ENCODE measurements at regions of chr11 and their contacts with region 1.

Region 1: DNA sequence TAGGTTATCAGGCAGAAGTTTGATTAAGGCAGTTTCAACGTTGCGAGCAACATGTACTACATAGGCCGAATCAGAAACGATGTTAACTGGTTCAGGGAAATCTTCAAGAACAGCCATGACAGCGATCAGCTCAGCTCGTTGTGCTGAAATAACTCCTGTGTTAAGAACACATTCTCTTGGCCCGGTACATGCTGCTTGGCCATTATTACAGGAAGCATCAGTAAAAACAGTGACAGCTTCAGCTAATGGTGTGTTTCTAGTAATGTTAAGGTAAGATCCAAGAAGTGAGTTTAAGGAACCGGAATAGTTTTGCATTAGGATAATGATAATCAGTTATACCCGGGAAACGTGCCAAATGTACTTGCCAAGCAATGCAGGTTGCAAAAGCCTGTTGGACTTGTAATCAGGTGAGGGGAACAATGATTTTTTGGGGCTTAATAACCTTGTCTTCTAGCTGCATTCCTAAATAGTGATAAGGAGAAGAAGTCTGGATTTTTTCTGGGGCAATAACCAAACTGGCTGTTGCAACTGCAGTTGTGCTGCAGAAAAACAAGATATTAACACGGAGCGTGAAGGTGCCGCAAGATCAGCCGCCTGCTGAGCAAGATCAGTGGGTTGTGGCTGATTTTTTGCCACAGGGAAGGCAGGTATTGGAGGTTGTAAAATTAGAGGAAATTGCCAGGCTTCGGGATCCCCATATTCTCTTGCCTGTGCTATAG is 14.3 kb downstream of the OR52K1 start:
- DNase-seq: no peak
- H3K4me3 Mint-ChIP-seq: no peak overlapping the region
- H3K27ac Mint-ChIP-seq: no peak overlapping the region
- H3K4me1 Mint-ChIP-seq: peaks cover 6% of the 10 kb centered on the region
- H3K27me3 Mint-ChIP-seq: peaks cover 7% of the 10 kb centered on the region

Region 2: GRCh38 chr11:4393209-4393857 is 103.4 kb before region 1 on chr11 and contains the start of gene TRIM21:
- CTCF ChIA-PET with region 1: interaction called, 4 read pairs
- POLR2A ChIA-PET with region 1: no interaction called
- intact Hi-C with region 1: loop called (anchors 1 kb)
- DNase-seq: peak; percentile 95
- H3K4me3 Mint-ChIP-seq: peak within 1 kb of the TSS; percentile 90
- H3K27ac Mint-ChIP-seq: peak within 1 kb of the TSS; percentile 91
- H3K4me1 Mint-ChIP-seq: peaks cover 32% of the 10 kb centered on the region
- H3K27me3 Mint-ChIP-seq: peaks cover 13% of the 10 kb centered on the region
- total RNA-seq, gene TRIM21: 39.2 to 40.3 TPM

Region 3: DNA sequence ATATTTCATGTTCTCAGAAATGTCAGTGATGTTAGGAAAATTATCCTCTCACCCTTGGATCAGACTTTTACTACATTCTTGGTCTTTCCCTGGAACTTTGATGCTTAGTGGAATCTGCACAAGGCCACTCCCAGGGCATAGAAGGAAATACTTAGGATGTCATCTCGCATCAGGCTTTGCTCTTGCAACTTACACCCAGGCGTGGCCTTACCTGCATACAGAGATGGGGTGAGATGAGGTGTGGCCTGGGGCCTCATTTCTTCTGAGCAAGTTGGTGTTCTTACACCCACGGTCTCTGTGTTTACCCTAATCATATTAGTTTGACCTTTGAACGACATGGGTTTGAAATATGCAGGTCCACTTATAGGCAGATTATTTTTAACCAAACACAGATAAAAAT is 66.7 kb before region 1 on chr11:
- CTCF ChIA-PET with region 1: no interaction called
- POLR2A ChIA-PET with region 1: no interaction called
- intact Hi-C with region 1: no loop called
- DNase-seq: no peak
- H3K4me3 Mint-ChIP-seq: no peak overlapping the region
- H3K27ac Mint-ChIP-seq: no peak overlapping the region
- H3K4me1 Mint-ChIP-seq: no peaks in the 10 kb centered on the region
- H3K27me3 Mint-ChIP-seq: no peaks in the 10 kb centered on the region

Region 4: DNA sequence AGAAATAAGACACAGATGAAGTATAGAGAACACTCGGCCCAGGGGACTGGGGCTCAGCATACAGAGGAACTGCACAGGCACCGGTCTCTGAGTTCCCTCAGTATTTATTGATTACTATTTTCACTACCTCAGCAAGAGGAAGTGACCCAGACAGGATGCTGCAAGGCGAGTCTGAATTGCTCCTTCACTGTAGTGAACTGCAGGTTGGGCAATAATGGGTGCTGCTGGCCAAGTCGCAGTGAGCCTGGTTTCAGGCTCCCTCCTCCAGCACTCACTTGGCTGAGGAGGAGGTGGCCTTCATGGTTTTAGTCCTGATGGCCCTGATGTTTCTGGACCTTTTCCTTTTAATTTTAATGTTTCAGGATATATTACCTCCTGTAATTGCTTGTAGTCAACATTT is 37.2 kb before region 1 on chr11:
- CTCF ChIA-PET with region 1: no interaction called
- POLR2A ChIA-PET with region 1: no interaction called
- intact Hi-C with region 1: no loop called
- DNase-seq: no peak
- H3K4me3 Mint-ChIP-seq: no peak overlapping the region
- H3K27ac Mint-ChIP-seq: no peak overlapping the region
- H3K4me1 Mint-ChIP-seq: no peaks in the 10 kb centered on the region
- H3K27me3 Mint-ChIP-seq: peaks cover 7% of the 10 kb centered on the region

Region 5: DNA sequence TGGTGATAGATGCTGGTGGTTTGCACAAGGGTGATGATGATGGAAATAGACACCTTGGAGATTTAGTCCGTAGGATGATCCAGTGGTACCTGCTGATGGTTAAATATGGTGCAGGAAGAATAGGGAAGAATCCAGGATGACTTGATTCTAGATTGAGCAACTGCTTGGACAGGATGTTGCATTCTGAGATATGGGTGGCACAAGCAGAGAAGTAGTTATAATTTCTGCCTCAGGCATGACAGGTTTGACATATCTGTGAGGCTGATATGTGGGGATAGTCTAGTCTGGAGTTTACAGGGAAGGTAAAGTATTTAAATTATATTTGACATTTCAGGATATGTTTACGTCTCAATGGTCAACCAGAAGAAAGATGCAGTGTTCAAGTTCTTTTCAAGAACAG is 26.8 kb before region 1 on chr11:
- CTCF ChIA-PET with region 1: no interaction called
- POLR2A ChIA-PET with region 1: no interaction called
- intact Hi-C with region 1: no loop called
- DNase-seq: no peak
- H3K4me3 Mint-ChIP-seq: no peak overlapping the region
- H3K27ac Mint-ChIP-seq: no peak overlapping the region
- H3K4me1 Mint-ChIP-seq: no peaks in the 10 kb centered on the region
- H3K27me3 Mint-ChIP-seq: peaks cover 9% of the 10 kb centered on the region

Region 6: DNA sequence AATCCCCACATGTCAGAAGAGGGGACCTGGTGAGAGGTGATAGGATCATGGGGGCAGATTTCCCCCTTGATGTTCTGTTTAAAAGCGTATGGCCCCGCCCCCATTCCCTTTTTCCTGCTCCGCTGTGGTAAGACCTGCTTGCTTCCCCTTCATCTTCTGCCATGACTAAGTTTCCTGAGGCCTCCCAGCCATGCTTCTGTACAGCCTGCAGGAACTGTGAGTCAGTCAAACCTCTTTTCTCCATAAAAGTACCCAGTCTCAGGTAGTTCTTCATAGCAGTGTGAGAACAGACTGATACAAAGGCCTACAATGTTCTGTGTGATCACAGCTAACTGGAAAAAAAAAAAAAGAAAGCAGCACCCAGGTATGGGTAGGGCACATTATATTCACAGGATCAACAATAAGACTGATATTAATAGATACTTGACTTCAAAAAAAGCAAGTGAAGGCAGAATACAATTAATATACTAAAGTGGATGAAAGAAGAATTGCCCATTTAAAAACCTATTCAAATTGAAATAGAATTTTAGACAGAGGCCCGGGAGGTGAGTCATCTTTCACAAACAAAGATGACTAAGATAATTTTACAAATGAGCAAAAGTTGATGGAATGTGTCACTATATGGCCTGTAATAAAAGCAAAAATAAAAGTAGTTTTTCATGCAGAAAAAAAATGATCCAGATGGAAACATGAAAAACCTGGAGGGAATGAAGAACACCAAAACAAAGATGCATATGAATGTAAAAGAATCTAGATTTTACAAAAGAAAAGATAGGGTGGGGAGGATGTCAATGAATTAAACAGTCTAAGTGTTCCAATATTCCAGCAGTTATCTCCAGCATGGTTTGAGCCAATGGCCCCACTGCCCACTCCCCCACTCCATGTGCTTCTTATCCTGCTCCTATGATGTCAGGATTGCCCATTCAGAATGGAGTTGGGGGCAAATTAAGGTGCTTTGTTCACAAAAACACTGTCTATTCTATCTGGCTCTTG is 15.8 kb before region 1 on chr11:
- CTCF ChIA-PET with region 1: interaction called, 10 read pairs
- POLR2A ChIA-PET with region 1: no interaction called
- intact Hi-C with region 1: loop called (anchors 1 kb)
- DNase-seq: peak; percentile 13
- H3K4me3 Mint-ChIP-seq: no peak overlapping the region
- H3K27ac Mint-ChIP-seq: no peak overlapping the region
- H3K4me1 Mint-ChIP-seq: peaks cover 13% of the 10 kb centered on the region
- H3K27me3 Mint-ChIP-seq: peaks cover 3% of the 10 kb centered on the region

Region 7: DNA sequence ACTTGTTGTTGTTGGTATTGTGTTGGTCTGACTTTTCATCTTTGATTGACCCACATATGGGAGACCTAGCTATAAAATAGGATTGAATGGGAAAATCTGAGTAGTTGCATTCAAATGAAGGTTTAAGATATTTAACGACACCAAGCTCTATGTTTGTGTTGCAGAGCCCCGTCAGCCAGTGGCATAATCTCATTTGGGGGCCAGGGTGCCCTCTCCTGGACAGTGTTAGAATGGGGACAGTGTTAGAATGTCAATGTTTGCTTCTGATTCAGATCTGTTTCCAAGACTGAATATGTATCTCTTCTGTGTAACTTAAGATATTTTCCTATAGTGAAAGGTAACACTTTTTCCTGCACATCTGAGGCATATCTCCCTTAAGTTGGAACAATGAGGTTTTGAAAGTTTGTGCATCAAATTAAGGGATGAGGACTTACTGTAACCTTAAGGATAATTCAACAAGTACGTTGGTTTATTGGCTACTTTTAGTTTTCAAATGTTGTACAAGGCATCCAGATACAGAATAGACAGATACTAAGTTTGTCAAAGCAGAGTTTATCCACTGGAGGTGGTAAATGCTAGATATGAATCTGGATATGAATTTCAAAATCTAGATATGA is 43.0 kb after region 1 on chr11:
- CTCF ChIA-PET with region 1: no interaction called
- POLR2A ChIA-PET with region 1: no interaction called
- intact Hi-C with region 1: loop called (anchors 1 kb)
- DNase-seq: peak; percentile 70
- H3K4me3 Mint-ChIP-seq: no peak overlapping the region
- H3K27ac Mint-ChIP-seq: no peak overlapping the region
- H3K4me1 Mint-ChIP-seq: no peaks in the 10 kb centered on the region
- H3K27me3 Mint-ChIP-seq: no peaks in the 10 kb centered on the region

Region 8: GRCh38 chr11:4607781-4608666 is 111.3 kb after region 1 on chr11 and contains the start of gene TRIM68:
- CTCF ChIA-PET with region 1: no interaction called
- POLR2A ChIA-PET with region 1: no interaction called
- intact Hi-C with region 1: loop called (anchors 5 kb)
- DNase-seq: peak; percentile 97
- H3K4me3 Mint-ChIP-seq: peak within 1 kb of the TSS; percentile 93
- H3K27ac Mint-ChIP-seq: peak within 1 kb of the TSS; percentile 87
- H3K4me1 Mint-ChIP-seq: peaks cover 34% of the 10 kb centered on the region
- H3K27me3 Mint-ChIP-seq: no peaks in the 10 kb centered on the region
- total RNA-seq, gene TRIM68: 8.7 to 9.2 TPM

Region 9: DNA sequence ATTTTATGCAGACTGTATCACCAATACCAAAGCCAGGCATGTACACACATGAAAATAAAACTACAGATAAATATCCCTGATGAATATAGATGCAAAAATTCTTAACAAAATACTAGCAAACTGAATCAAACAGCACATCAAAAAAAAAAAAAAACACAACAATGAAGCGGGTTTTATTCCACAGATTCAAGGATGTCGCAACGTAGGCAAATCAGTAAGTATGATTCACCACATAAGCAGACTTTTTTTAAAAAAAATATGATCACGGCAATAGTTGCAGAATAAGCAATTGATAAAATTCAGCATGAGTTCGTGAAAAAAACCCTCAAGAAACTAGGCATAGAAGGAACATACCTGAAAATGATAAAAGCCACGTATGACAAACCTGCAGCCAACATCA is 251.7 kb after region 1 on chr11:
- CTCF ChIA-PET with region 1: no interaction called
- POLR2A ChIA-PET with region 1: no interaction called
- intact Hi-C with region 1: no loop called
- DNase-seq: no peak
- H3K4me3 Mint-ChIP-seq: no peak overlapping the region
- H3K27ac Mint-ChIP-seq: no peak overlapping the region
- H3K4me1 Mint-ChIP-seq: no peaks in the 10 kb centered on the region
- H3K27me3 Mint-ChIP-seq: peaks cover 6% of the 10 kb centered on the region